CD4-positive, alpha-beta T cell (primary cell): ENCODE measurements at regions of chr20 and their contacts with region 1.

Region 1: DNA sequence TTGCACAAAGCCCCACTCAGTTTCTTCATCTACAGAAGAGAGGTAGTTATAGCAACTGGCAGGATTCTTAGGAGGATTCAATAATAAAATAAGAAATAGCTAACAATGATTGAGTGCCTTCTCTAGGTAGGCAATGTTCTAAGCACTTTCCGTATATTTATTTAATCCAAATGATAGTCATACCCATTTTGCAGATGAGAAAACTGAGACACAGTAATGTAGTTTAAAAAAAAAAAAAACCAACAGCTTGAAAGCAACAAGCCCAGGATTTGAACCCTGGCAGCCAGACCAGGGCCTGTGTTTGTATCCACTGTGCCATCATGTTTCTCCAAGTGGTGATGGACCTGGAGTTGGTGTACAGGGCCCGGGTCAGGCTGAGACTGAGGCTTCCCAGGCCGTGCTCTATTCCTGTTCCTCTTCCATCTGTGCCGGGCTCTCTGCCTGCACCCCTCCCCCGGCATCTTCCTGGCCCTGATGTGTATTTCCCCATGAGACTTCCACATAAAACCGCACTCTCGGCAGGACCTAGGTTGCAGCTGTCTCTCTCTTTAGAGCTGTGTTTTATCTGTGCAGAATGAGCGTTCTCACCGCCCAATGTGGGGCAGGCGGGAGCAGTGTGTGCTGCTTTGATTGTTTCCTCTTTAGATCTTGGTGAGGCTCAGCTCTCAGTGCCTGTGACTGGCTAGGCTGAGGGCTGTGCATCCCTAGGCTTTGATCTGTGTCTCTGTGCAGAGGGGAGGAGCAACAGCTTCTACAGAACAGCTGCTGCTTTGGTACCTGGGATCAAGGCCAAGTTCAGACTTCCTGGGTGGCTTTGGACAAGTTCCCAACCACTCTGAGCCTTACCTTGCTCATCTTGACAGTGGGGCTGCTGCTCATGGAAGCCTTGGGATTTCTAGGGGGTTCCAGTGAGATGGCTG is 49.5 kb downstream of the TOX2 start:
- DNase-seq: peak; percentile 25 to 83 (median 51)
- ATAC-seq: peak; percentile 90
- H3K4me3 ChIP-seq: no peak overlapping the region
- H3K4me3 Mint-ChIP-seq: peak overlapping the region; percentile 45
- H3K27ac ChIP-seq: no peak overlapping the region
- H3K27ac Mint-ChIP-seq: no peak overlapping the region
- H3K4me1 ChIP-seq: peaks cover 66% of the 10 kb centered on the region
- H3K4me1 Mint-ChIP-seq: peaks cover 37% of the 10 kb centered on the region
- H3K27me3 ChIP-seq: no peaks in the 10 kb centered on the region
- H3K27me3 Mint-ChIP-seq: no peaks in the 10 kb centered on the region
- CTCF ChIP-seq: no peak

Region 2: GRCh38 chr20:43942661-43943290 is 21.4 kb before region 1 on chr20:
- CTCF ChIA-PET with region 1: no interaction called
- POLR2A ChIA-PET with region 1: interaction called, 28 read pairs
- intact Hi-C with region 1: loop called in 1 of 2 experiments (anchors 2 kb)
- DNase-seq: peak in 5 of 14 experiments; percentile 20 to 66 (median 56)
- ATAC-seq: peak; percentile 71
- H3K4me3 ChIP-seq: no peak overlapping the region
- H3K4me3 Mint-ChIP-seq: peak overlapping the region; percentile 53
- H3K27ac ChIP-seq: peak overlapping the region in 1 of 2 donors; percentile 30
- H3K27ac Mint-ChIP-seq: peak overlapping the region; percentile 85
- H3K4me1 ChIP-seq: peaks cover 80% of the 10 kb centered on the region
- H3K4me1 Mint-ChIP-seq: peaks cover 86% of the 10 kb centered on the region
- H3K27me3 ChIP-seq: no peaks in the 10 kb centered on the region
- H3K27me3 Mint-ChIP-seq: no peaks in the 10 kb centered on the region
- CTCF ChIP-seq: no peak